ENCODE measurements at regions of chr1 and their contacts with region 1.

Region 1: DNA sequence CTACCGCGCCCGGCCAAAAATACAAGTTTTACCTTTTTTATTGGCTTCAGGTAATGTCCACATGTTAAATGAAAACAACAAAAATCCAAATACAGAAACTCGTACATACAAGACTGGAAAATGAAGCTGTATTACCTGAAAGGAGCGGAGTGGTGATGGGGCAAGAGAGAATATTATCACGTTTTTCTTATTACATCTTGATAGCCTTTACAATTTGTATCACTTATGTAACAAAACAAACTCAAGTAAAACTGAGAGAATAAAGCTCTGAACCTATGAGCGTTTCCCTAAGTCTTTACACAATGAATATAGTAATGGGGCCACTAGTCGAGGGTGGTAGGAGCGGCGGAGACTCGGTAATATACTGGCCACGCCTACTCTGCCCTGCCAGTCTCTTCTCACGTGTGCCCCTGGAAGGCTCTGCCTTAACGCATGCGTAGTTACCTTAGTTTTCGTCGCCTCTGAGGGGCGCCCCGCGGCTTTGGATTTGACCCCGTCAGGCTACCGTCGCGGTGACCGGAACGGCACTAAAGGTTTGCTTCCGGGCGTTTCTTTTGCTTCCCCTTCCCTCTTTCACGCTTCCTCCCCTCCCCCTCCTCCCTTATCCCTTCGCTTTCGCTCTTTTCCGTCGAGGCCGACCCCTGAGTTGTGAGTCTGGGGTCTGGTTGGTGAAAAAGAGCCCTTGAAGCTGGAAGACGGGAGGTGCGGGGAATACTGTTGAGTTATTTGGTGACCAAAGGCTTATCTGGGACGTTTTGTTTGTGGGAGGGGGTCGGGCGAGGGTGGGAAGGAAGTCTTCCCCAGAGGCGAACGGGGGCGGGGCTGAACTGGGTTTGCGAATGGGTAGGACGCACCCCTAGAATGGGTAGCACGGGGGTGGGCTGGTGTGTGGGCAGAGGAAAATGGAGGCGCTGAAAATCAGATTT is at the start of gene SETDB1:
- DNase-seq: peak; percentile 93
- H3K4me3 Mint-ChIP-seq: peak within 1 kb of the TSS; percentile 97
- H3K27ac Mint-ChIP-seq: peak within 1 kb of the TSS; percentile 98
- H3K4me1 Mint-ChIP-seq: peaks cover 20% of the 10 kb centered on the region
- H3K27me3 Mint-ChIP-seq: no peaks in the 10 kb centered on the region
- total RNA-seq, gene SETDB1: 60.9 and 61.1 TPM in 2 replicates

Region 2: GRCh38 chr1:150613061-150613920 is 312.8 kb before region 1 on chr1:
- intact Hi-C with region 1: loop called (anchors 2 kb)
- DNase-seq: peak; percentile 32
- H3K4me3 Mint-ChIP-seq: peak overlapping the region; percentile 23
- H3K27ac Mint-ChIP-seq: peak overlapping the region; percentile 90
- H3K4me1 Mint-ChIP-seq: peaks cover 56% of the 10 kb centered on the region
- H3K27me3 Mint-ChIP-seq: no peaks in the 10 kb centered on the region

Region 3: GRCh38 chr1:150650199-150650598 is 275.9 kb before region 1 on chr1:
- intact Hi-C with region 1: no loop called
- DNase-seq: no peak
- H3K4me3 Mint-ChIP-seq: no peak overlapping the region
- H3K27ac Mint-ChIP-seq: no peak overlapping the region
- H3K4me1 Mint-ChIP-seq: no peaks in the 10 kb centered on the region
- H3K27me3 Mint-ChIP-seq: no peaks in the 10 kb centered on the region

Region 4: GRCh38 chr1:150820710-150821512 is 105.2 kb before region 1 on chr1:
- intact Hi-C with region 1: loop called (anchors 5 kb)
- DNase-seq: no peak
- H3K4me3 Mint-ChIP-seq: no peak overlapping the region
- H3K27ac Mint-ChIP-seq: no peak overlapping the region
- H3K4me1 Mint-ChIP-seq: peaks cover 12% of the 10 kb centered on the region
- H3K27me3 Mint-ChIP-seq: no peaks in the 10 kb centered on the region

Region 5: GRCh38 chr1:150876119-150876454 is 50.0 kb before region 1 on chr1:
- intact Hi-C with region 1: loop called (anchors 1 kb)
- DNase-seq: no peak
- H3K4me3 Mint-ChIP-seq: peak overlapping the region; percentile 95
- H3K27ac Mint-ChIP-seq: peak overlapping the region; percentile 92
- H3K4me1 Mint-ChIP-seq: peaks cover 33% of the 10 kb centered on the region
- H3K27me3 Mint-ChIP-seq: no peaks in the 10 kb centered on the region

Region 6: DNA sequence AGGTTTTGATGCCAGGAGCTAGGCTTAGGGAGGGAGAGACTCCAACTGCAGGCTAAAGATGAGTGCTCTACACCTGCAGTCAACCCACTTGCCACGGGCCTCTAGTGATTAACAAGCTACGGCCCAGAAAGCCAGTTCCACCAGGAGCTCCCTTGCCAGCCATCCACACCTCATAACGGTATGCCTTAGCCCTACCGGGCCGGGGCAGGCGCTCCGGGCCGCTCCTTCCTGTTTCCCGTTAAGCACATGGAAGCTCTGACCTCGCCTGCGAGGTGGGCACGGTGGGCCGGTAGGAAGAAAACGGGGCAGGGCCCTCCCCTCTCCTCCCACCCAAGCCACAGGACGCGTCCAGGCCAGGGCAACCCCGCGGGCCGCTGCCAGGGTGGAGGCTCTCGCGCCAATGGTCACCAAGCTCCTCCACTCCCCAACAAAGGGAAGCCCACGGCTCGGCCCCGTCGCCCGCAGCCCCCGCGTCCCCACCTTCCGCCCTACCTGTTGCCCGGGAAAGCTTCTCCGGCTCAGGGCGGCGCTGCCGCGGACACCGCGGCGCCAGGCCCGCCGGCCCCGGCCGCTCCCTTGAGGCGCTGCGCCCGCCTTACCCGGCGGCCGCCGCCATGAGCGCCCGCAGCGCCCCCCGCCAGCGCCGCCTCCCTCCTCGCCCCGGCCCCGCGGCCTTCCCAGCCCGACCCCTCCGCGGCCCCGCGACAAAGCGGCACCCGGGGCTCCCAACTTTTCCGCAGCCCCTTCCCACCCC is 47.9 kb after region 1 on chr1:
- intact Hi-C with region 1: loop called (anchors 2 kb)
- DNase-seq: peak; percentile 33
- H3K4me3 Mint-ChIP-seq: peak overlapping the region; percentile 87
- H3K27ac Mint-ChIP-seq: peak overlapping the region; percentile 68
- H3K4me1 Mint-ChIP-seq: peaks cover 53% of the 10 kb centered on the region
- H3K27me3 Mint-ChIP-seq: no peaks in the 10 kb centered on the region

Measured in activated T-helper 2 cell treated with anti-CD3 and anti-CD28 coated beads, Interferon-gamma antibody, Interleukin-2, Interleukin-4, amounts not matched to agents 10 μg/mL and 5 μg/mL and 100 μg/mL, durations not matched to agents 14 hours and 24 hours and 36 hours (primary cell).